ENCODE measurements at regions of chr7 and their contacts with region 1.

Region 1: DNA sequence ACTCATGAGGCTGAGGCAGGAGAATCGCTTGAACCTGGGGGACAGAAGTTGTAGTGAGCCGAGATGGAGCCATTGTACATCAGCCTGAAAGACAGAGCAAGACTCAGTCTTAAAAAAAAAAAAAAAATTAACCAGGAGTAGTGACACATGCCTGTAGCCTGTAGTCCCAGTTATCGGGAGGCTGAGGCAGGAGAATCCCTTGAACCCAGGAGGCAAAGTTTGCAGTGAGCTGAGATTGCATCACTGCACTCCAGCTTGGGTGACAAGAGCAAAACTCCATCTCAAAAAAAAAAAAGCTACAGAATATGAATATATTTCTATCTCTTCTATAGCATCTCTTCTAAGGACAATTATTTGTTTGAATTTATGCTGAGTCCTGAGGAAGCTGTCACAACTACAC is 6.5 kb downstream of the AZGP1 start:
- DNase-seq: no peak
- H3K4me3 ChIP-seq: no peak overlapping the region
- H3K27ac ChIP-seq: no peak overlapping the region
- H3K4me1 ChIP-seq: no peaks in the 10 kb centered on the region
- H3K27me3 ChIP-seq: no peaks in the 10 kb centered on the region
- CTCF ChIP-seq: no peak
- EP300 ChIP-seq: no peak
- POLR2A ChIP-seq: no peak

Region 2: GRCh38 chr7:99404235-99404966 is 564.9 kb before region 1 on chr7:
- intact Hi-C with region 1: no loop called
- DNase-seq: peak in 1 of 5 donors; percentile 47
- H3K4me3 ChIP-seq: no peak overlapping the region
- H3K27ac ChIP-seq: no peak overlapping the region
- H3K4me1 ChIP-seq: peaks cover 9% of the 10 kb centered on the region
- H3K27me3 ChIP-seq: no peaks in the 10 kb centered on the region
- CTCF ChIP-seq: no peak
- EP300 ChIP-seq: no peak
- POLR2A ChIP-seq: no peak

Region 3: DNA sequence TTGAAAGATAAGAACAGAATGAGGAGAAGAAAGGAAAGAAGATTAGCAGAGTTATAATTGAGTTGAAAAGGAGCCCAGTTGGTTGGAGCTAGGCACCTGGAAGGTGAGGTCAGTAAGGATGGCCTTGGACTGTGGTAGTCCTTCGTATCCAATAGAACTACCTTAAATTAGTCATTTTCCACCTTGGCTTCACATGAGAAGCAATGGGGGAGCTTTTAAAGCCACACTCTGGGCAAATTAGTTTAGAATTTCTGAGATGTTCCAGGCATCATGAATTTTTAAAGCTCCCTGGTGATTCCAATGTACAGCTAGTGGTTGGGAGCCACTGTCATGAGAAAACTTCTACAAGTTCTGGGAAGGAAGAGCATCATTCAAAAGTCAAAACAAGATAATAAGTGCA is 262.2 kb before region 1 on chr7:
- intact Hi-C with region 1: no loop called
- DNase-seq: no peak
- H3K4me3 ChIP-seq: no peak overlapping the region
- H3K27ac ChIP-seq: no peak overlapping the region
- H3K4me1 ChIP-seq: no peaks in the 10 kb centered on the region
- H3K27me3 ChIP-seq: no peaks in the 10 kb centered on the region
- CTCF ChIP-seq: no peak
- EP300 ChIP-seq: no peak
- POLR2A ChIP-seq: no peak

Region 4: DNA sequence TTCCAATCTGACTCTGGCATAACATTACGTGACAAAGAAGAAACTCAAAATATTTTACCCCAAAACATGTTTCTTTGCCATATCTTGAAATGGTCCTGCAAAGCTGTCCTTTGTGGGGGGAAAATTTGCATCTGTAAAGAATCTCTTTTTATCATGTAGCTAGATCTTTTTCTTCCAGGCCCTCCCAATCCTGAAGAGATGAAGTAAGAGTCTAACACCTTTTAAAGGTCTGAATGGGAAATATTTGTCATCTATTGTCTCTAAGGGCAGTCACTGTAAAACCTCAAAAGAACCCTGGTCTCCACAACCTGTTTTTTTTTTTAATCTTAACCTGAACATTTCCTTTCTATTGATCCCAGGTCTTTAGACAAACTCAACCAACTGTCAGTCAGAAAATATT is 101.1 kb before region 1 on chr7:
- intact Hi-C with region 1: loop called in 1 of 4 experiments (anchors 5 kb)
- DNase-seq: no peak
- H3K4me3 ChIP-seq: no peak overlapping the region
- H3K27ac ChIP-seq: no peak overlapping the region
- H3K4me1 ChIP-seq: no peaks in the 10 kb centered on the region
- H3K27me3 ChIP-seq: no peaks in the 10 kb centered on the region
- CTCF ChIP-seq: no peak
- EP300 ChIP-seq: no peak
- POLR2A ChIP-seq: no peak

Region 5: DNA sequence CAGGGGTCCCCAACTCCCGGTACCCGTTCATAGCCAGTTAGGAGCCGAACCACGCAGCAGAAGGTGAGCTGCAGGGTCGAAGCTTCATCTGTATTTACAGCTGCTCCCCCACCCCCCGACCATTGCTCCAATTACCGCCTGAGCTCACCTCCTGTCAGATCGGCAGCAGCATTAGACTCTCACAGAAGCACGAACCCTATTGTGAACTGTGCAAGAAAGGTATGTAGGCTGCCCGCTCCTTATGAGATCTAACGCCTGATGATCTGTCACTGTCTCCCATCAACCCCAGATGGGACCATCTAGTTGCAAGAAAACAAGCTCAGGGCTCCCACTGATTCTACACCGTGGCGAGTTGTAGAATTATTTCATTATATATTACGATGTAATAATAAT is 21.2 kb after region 1 on chr7:
- intact Hi-C with region 1: loop called in 1 of 4 experiments (anchors 1 kb)
- DNase-seq: no peak
- H3K4me3 ChIP-seq: no peak overlapping the region
- H3K27ac ChIP-seq: no peak overlapping the region
- H3K4me1 ChIP-seq: no peaks in the 10 kb centered on the region
- H3K27me3 ChIP-seq: no peaks in the 10 kb centered on the region
- CTCF ChIP-seq: no peak
- EP300 ChIP-seq: no peak
- POLR2A ChIP-seq: no peak

Region 6: DNA sequence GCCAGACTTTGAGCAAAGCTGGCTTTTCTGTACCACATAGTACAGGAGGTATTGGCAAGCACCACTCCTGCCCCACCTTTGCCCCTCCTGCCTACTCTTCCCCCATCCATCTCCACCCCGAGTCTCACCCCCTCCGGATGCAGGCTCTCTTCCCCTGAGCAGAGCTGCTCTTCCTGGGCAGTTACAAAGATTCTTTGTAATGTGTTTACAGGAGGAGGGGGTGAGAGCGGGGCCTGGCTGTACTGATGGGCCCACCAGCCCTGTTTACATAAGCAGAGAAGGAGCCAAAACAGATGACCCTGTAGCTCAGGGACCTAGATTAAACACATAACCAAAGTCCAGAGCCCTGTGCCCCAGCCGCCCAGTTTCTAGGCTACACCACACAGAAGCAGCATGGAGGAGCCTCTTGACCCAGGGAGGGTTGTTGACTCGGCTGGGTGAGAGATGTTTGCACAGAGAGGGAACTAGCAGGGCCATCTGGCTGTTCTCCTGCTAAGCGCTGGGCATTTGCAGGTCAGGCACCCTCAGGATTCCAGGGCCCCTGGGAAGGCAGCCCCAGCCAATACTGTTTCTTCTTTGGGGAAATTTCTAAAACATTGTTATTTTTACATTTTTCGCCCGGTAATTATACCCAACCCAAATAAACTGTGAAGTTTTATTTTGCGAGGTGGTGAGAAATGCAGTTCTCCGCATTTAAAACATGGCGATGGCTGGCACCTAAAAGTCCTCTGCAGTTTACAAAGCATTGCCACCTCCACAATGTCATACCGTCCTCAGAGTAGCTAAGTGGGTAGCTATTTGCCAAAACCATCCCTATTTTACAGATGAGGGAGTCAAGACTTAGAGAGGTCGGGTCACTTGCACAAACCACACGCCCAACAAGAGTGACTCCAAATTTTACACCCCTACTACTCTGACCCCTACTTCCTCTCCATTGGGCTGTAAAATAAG is 34.7 kb after region 1 on chr7:
- intact Hi-C with region 1: no loop called
- DNase-seq: no peak
- H3K4me3 ChIP-seq: no peak overlapping the region
- H3K27ac ChIP-seq: no peak overlapping the region
- H3K4me1 ChIP-seq: no peaks in the 10 kb centered on the region
- H3K27me3 ChIP-seq: no peaks in the 10 kb centered on the region
- CTCF ChIP-seq: no peak
- EP300 ChIP-seq: no peak
- POLR2A ChIP-seq: no peak

Measured in ovary (tissue), 10 donors.